A673 (cell line): ENCODE measurements at regions of chr2 and their contacts with region 1.

Region 1: GRCh38 chr2:128362846-128363228 is 44.2 kb upstream of the HS6ST1 start:
- DNase-seq: peak; percentile 57
- H3K4me3 ChIP-seq: no peak overlapping the region
- H3K27ac ChIP-seq: no peak overlapping the region
- H3K4me1 ChIP-seq: peaks cover 12% of the 10 kb centered on the region
- H3K27me3 ChIP-seq: no peaks in the 10 kb centered on the region
- CTCF ChIP-seq: no peak

Region 2: GRCh38 chr2:128300151-128301020 is 62.5 kb before region 1 on chr2:
- CTCF ChIA-PET with region 1: interaction called, 12 read pairs
- POLR2A ChIA-PET with region 1: no interaction called
- intact Hi-C with region 1: no loop called
- DNase-seq: no peak
- H3K4me3 ChIP-seq: no peak overlapping the region
- H3K27ac ChIP-seq: no peak overlapping the region
- H3K4me1 ChIP-seq: peaks cover 9% of the 10 kb centered on the region
- H3K27me3 ChIP-seq: no peaks in the 10 kb centered on the region
- CTCF ChIP-seq: no peak